ENCODE measurements at regions of chrX and their contacts with region 1.

Region 1: GRCh38 chrX:17496407-17496806 is 121.4 kb downstream of the NHS start:
- DNase-seq: no peak
- ATAC-seq: no peak
- H3K4me3 ChIP-seq: no peak overlapping the region
- H3K27ac ChIP-seq: no peak overlapping the region
- H3K4me1 ChIP-seq: peaks cover 0 to 2% of the 10 kb centered on the region in 2 donors
- H3K27me3 ChIP-seq: no peaks in the 10 kb centered on the region

Region 2: DNA sequence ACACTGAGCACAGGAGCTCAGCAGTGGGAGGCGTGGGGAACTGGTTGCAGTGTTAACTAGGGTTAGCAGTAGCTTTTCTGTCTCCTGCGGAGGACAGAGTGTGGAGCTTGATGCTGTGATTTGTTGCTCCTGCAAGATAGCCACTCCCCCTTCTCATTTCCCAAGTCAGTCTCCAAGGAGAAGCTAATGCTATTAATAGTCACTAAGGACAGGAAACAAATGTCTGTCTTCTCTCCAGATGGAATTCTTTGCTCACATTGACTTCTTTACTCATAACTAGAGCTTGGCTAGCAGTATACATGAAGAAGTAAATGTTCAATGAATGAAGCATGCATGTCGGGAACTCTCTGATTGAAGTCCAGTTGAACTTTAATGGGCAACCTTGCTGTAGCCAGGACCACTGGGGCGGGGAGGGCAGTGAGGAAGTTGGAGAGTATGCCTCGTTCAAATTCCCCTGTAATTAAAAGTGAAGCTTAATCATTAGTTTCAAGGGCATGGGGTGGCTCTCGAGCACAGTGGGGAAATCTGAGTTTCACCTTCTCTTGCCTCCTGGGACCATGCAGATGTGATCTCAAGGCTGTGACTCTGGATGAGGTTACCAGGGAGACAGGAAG is 84.2 kb after region 1 on chrX:
- intact Hi-C with region 1: loop called in 1 of 2 experiments (anchors 10 kb)
- DNase-seq: no peak
- ATAC-seq: peak; percentile 67
- H3K4me3 ChIP-seq: no peak overlapping the region
- H3K27ac ChIP-seq: peak overlapping the region in 1 of 2 donors; percentile 92
- H3K4me1 ChIP-seq: peaks cover 0 to 2% of the 10 kb centered on the region in 2 donors
- H3K27me3 ChIP-seq: no peaks in the 10 kb centered on the region

Region 3: DNA sequence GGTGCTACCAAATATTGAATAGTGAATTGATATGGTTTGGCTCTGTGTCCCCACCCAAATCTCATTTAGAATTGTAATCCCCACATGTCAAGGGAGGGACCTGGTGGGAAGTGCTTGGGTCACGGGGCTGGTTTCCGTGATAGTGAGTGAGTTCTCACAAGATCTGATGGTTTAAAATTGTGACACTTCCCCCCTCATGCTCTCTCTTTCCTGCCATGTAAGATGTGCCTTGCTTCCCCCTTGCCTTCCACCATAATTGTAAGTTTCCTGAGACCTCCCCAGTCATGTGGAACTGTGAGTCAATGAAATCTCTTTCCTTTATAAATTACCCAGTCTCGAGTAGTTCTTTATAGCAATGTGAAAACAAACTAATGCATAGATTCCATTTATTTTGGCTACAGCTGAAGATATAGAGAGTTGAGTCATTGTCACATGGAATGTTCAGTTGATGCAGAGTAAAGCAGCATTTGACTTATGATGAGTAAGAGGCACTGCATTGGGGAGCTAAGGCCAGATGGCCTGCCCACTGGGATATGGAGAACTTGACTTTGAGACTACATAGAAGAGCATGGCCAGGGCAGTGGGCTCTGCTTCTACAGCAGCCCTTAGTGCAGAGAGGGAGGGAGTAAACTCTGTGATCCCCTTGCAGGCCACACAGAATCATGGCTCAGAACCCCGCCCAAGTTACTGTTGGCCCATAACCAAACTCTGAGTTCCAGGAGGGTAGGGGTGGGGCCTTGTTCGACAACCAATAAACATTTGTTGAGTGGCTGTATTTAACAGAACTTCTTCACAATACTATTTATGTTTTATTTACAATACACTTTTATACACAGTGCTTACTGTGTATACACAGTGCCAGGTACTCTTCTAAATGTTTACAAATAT is 330.4 kb after region 1 on chrX:
- intact Hi-C with region 1: no loop called
- DNase-seq: no peak
- ATAC-seq: no peak
- H3K4me3 ChIP-seq: no peak overlapping the region
- H3K27ac ChIP-seq: no peak overlapping the region
- H3K4me1 ChIP-seq: no peaks in the 10 kb centered on the region
- H3K27me3 ChIP-seq: no peaks in the 10 kb centered on the region